ENCODE measurements at regions of chr12 and their contacts with region 1.

Region 1: DNA sequence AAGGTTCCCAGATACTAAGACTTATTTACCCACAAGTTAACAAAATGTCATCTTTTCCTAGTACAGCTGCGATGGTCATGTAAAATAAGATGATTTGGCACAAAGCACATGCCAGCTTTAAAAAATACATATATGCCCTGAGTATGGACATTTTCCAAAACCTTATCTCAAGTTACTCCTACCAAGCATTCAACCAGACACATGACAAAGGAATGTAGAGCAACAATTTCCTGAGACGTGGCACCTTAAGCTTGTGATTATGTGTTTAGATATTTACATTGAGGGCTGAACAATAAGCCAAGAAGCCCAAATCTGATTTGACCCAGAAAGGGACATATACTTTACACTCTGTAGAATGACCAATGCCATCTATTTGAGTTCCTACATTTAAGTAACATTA is 24.5 kb upstream of the OVCH1 start:
- DNase-seq: no peak
- ATAC-seq: no peak
- H3K4me3 ChIP-seq: no peak overlapping the region
- H3K4me3 Mint-ChIP-seq: no peak overlapping the region
- H3K27ac ChIP-seq: no peak overlapping the region
- H3K27ac Mint-ChIP-seq: no peak overlapping the region
- H3K4me1 ChIP-seq: no peaks in the 10 kb centered on the region
- H3K4me1 Mint-ChIP-seq: no peaks in the 10 kb centered on the region
- H3K27me3 ChIP-seq: no peaks in the 10 kb centered on the region
- H3K27me3 Mint-ChIP-seq: no peaks in the 10 kb centered on the region

Region 2: GRCh38 chr12:28242496-28243309 is 1279.2 kb before region 1 on chr12:
- CTCF ChIA-PET with region 1: no interaction called
- POLR2A ChIA-PET with region 1: no interaction called
- DNase-seq: no peak
- ATAC-seq: no peak
- H3K4me3 ChIP-seq: no peak overlapping the region
- H3K4me3 Mint-ChIP-seq: no peak overlapping the region
- H3K27ac ChIP-seq: no peak overlapping the region
- H3K27ac Mint-ChIP-seq: no peak overlapping the region
- H3K4me1 ChIP-seq: peaks cover 0 to under 1% of the 10 kb centered on the region in 2 experiments
- H3K4me1 Mint-ChIP-seq: peaks cover 23 to 32% (median 26%) of the 10 kb centered on the region in 3 donors
- H3K27me3 ChIP-seq: no peaks in the 10 kb centered on the region
- H3K27me3 Mint-ChIP-seq: no peaks in the 10 kb centered on the region

Region 3: GRCh38 chr12:29103539-29103974 is 418.4 kb before region 1 on chr12:
- CTCF ChIA-PET with region 1: no interaction called
- POLR2A ChIA-PET with region 1: no interaction called
- DNase-seq: peak in 32 of 35 experiments; percentile 2 to 81 (median 35)
- ATAC-seq: peak; percentile 88 to 95 (median 92)
- H3K4me3 ChIP-seq: peak overlapping the region; percentile 26 to 57
- H3K4me3 Mint-ChIP-seq: peak overlapping the region; percentile 67 to 71 (median 67)
- H3K27ac ChIP-seq: peak overlapping the region; percentile 83
- H3K27ac Mint-ChIP-seq: peak overlapping the region; percentile 97 to 99
- H3K4me1 ChIP-seq: peaks cover 14 to 33% of the 10 kb centered on the region in 2 experiments
- H3K4me1 Mint-ChIP-seq: peaks cover 36 to 46% (median 42%) of the 10 kb centered on the region in 3 donors
- H3K27me3 ChIP-seq: no peaks in the 10 kb centered on the region
- H3K27me3 Mint-ChIP-seq: no peaks in the 10 kb centered on the region

Region 4: DNA sequence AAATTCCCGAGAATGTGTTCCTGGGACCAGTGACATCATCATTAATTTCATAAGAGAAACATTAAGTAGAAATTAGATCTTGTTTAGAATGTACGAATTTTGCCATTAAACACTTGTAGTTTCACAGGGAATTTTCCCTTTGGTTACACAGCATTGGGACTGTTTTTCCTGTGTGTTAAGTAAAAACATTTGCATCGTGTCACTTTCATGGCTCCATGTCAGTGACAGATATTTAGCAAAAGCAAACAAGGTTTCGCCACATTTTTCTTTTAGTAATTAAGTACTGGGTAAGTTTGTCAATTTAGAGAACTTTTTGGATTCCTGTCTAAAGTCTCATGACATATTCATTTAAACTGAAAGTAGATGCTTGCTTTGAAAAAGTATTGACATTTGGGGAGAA is 21.1 kb after region 1 on chr12:
- CTCF ChIA-PET with region 1: no interaction called
- POLR2A ChIA-PET with region 1: no interaction called
- DNase-seq: no peak
- ATAC-seq: no peak
- H3K4me3 ChIP-seq: no peak overlapping the region
- H3K4me3 Mint-ChIP-seq: no peak overlapping the region
- H3K27ac ChIP-seq: no peak overlapping the region
- H3K27ac Mint-ChIP-seq: no peak overlapping the region
- H3K4me1 ChIP-seq: no peaks in the 10 kb centered on the region
- H3K4me1 Mint-ChIP-seq: no peaks in the 10 kb centered on the region
- H3K27me3 ChIP-seq: peaks cover 4% of the 10 kb centered on the region in 2 experiments
- H3K27me3 Mint-ChIP-seq: peaks cover 8 to 20% of the 10 kb centered on the region in 2 donors

Region 5: GRCh38 chr12:30847259-30847658 is 1325.3 kb after region 1 on chr12:
- CTCF ChIA-PET with region 1: interaction called, 5 to 14 read pairs
- POLR2A ChIA-PET with region 1: no interaction called
- DNase-seq: peak in 6 of 35 experiments; percentile 8 to 71 (median 15)
- ATAC-seq: no peak
- H3K4me3 ChIP-seq: no peak overlapping the region
- H3K4me3 Mint-ChIP-seq: no peak overlapping the region
- H3K27ac ChIP-seq: no peak overlapping the region
- H3K27ac Mint-ChIP-seq: no peak overlapping the region
- H3K4me1 ChIP-seq: peaks cover 0 to 6% of the 10 kb centered on the region in 2 experiments
- H3K4me1 Mint-ChIP-seq: peaks cover 9 to 10% (median 9%) of the 10 kb centered on the region in 3 donors
- H3K27me3 ChIP-seq: no peaks in the 10 kb centered on the region
- H3K27me3 Mint-ChIP-seq: no peaks in the 10 kb centered on the region

Measured in T-cell (primary cell).